GM10248 (cell line): ENCODE measurements at regions of chr15 and their contacts with region 1.

Region 1: GRCh38 chr15:55407949-55408791 is at the starts of genes CCPG1 and PIERCE2:
- DNase-seq: peak; percentile 94
- CTCF ChIP-seq: peak; percentile 42

Region 2: DNA sequence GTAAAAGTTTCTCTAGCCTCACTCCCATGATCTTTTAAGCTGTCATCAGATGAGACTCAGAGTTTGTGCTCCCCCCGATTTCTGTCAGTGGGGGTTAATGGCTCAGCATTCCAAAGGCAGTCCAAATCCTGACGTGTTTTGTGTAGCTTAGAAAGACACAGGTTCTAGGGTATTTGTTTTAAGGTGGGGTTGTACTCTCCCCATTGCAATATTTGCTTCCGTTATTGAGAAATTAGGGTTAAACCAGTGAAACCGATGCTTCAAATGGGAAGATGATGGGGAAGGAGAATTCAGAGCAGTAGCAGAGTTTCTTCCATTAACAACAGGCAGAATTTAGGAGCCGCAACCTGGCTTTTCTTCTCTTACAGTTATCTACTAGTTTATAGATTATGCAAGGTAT is 85.7 kb before region 1 on chr15:
- CTCF ChIA-PET with region 1: interaction called, 15 read pairs
- POLR2A ChIA-PET with region 1: interaction called, 3 read pairs
- DNase-seq: no peak
- CTCF ChIP-seq: no peak

Region 3: DNA sequence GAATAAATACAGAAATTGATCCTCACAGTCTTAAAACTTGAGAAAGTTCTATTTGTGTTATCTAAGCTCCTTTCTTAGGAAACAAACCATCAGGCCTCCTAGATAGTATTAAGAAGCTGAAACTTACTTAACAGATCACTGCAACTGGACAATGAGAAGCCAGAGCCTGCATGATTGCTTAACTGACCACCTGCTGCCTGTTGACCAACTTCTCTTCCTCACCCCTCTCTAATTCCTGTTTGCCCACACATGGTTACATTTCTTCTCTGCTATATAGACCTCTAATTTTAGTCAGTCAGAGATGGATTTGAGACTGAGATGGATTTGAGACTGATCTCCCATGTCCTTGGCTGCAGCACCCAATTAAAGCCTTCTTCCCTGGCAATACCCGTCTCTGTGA is 13.5 kb before region 1 on chr15:
- CTCF ChIA-PET with region 1: interaction called, 30 read pairs
- POLR2A ChIA-PET with region 1: no interaction called
- DNase-seq: no peak
- CTCF ChIP-seq: no peak